Right ventricle myocardium inferior (tissue), 1 donor: ENCODE measurements at regions of chrX and their contacts with region 1.

Region 1: DNA sequence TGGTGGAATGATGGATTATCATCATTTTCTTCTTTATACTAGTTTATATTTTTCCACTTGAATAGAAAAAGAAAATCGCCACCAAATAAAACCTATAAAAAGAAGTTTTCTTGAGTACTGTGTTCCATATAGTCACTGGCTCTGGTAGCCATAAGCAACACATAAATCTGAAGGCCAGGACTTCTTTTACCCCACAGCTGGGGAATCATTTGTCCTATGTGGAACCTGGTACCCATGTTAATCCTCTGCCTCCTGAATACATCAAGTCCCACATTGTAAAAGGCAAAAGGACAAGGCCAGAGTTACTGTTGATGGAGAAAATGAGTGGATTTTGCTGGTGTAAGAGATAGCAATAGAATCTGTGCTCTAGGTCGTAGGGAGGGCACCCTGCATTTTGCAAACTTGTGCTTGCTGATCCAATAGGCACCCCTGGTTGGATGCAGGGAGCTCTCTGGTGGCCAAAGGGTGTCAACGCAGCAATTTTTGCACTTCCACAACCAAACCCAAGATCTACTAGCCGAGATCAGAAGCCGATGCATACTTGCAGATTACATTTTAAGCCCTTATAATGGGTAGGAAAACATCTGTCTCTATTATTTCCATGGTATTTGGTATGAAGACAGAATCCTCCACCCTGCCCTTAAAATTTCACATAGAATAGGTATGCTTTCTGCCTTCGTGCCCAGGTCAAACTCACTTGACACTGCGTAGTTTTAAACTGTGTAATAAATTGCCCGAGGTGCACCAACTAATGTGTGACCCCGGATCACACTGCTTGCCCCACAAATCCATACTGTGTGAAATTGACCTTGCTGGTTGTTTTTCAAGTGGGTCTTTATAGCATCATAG is 146.2 kb upstream of the SCML1 start:
- DNase-seq: peak; percentile 59
- ATAC-seq: peak; percentile 89

Region 2: DNA sequence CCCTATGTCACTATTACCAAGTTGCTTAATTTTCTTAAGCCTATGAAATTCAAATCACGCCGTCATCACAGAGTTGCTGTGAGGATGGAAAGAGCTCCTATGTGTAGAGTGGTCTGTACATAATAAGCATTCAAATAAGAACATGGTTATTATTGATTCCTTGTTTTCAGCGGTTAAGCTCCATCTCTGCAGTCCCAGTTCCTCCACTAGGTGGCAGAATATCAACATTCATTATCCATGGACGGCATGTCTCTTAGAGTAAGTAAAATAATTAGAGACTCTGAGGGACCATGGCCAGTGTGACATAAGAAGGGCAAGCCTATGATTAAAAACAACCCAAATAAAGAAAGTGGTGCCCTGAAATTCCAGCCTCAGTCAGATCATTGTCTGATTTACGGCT is 348.6 kb before region 1 on chrX:
- intact Hi-C with region 1: loop called (anchors 2 kb)
- DNase-seq: no peak
- ATAC-seq: no peak